ENCODE measurements at regions of chr12 and their contacts with region 1.

Region 1: DNA sequence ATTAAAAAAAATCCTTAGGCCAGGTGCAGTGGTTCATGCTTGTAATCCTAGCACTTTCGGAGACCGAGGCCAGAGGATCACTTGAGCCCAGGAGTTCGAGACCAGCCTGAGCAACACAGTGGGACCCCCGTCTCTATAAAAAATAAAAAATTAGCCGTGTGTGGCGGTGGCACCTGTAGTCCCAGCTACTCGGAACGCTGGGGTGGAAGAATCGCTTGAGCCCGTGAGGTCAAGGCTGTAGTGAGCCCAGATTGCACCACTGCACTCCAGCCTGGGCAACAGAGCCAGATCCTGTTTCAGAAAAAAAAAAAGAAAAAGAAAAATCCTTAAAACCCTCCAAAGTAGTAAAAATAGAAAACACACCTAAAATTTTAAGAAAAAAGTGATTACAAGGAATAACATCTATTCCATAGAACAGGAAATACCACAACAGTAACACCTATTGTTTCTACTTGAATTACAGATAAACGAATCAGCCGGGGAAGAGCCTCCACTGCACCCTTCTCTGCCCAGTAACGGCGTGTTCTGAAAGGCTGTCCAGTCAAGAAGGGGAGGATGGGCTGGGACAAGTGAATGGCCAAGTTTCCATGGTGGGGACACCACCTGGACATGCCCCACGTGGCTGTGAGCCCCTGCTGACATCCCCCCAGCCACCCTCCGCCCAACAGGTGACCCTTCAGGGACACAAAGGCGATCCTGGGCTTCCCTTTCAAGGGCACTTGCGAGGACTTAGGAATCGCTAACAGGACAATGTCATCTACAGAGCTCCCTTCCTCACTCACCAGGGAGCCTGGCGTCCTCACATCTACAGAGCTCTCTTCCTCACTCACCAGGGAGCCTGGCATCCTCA is 17.8 kb downstream of the POLE start:
- DNase-seq: no peak
- ATAC-seq: no peak
- H3K4me3 ChIP-seq: no peak overlapping the region
- H3K4me3 Mint-ChIP-seq: no peak overlapping the region
- H3K27ac ChIP-seq: no peak overlapping the region
- H3K27ac Mint-ChIP-seq: no peak overlapping the region
- H3K4me1 ChIP-seq: peaks cover 0 to 8% of the 10 kb centered on the region in 2 experiments
- H3K4me1 Mint-ChIP-seq: peaks cover 0 to 5% (median 4%) of the 10 kb centered on the region in 3 donors
- H3K27me3 ChIP-seq: no peaks in the 10 kb centered on the region
- H3K27me3 Mint-ChIP-seq: no peaks in the 10 kb centered on the region

Region 2: DNA sequence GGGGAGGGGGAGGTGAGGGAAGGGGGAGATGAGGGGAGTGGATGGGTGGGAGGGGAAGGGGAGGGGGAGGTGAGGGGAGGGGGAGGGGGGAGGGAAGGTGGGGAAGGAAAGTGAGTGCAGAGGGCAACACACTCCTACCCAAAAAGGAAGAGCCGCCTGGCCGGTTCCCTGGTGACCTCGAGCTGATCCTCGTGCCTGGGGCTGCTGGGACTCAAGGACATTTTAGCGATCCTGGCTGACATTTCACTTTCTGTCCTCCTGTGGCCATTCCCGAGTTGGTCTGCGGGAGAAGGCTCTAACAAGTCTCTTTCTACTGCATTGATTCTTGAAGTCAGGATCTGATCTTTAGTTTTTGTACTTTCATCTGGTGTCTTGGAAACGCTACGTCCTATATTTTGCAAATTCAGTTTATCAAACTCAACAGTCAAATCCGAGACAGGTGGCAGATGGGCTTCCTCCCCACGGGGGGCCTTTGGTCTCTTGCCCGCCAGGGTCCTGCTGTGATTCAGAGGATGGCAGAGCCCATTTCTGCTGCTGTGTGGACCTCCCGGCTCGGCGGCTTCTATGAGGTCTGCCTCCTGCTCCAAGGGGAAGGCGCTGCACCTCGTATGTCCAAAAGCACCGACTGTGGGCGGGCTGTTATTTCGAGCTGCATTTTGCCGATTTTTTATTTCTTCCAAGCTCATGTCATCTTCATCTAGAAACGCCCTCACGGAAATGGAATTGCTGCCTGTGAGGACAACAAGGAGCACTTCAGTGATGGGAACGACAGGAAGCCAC is 60.3 kb after region 1 on chr12:
- CTCF ChIA-PET with region 1: interaction called in 1 of 2 experiments, 15 read pairs
- POLR2A ChIA-PET with region 1: no interaction called
- DNase-seq: no peak
- ATAC-seq: no peak
- H3K4me3 ChIP-seq: no peak overlapping the region
- H3K4me3 Mint-ChIP-seq: no peak overlapping the region
- H3K27ac ChIP-seq: no peak overlapping the region
- H3K27ac Mint-ChIP-seq: no peak overlapping the region
- H3K4me1 ChIP-seq: no peaks in the 10 kb centered on the region
- H3K4me1 Mint-ChIP-seq: peaks cover 2 to 9% (median 4%) of the 10 kb centered on the region in 3 donors
- H3K27me3 ChIP-seq: no peaks in the 10 kb centered on the region
- H3K27me3 Mint-ChIP-seq: no peaks in the 10 kb centered on the region

Measured in T-cell (primary cell).